Activated CD8-positive, alpha-beta T cell treated with anti-CD3 and anti-CD28 coated beads, Interleukin-2, amount 10 ng/mL, durations not matched to agents 7 days and 5 days (primary cell): ENCODE measurements at regions of chr22 and their contacts with region 1.

Region 1: GRCh38 chr22:37148742-37149665 is 712 bp downstream of the IL2RB start:
- DNase-seq: no peak
- ATAC-seq: peak; percentile 8
- H3K4me3 Mint-ChIP-seq: peak overlapping the region; percentile 84
- H3K27ac Mint-ChIP-seq: peak overlapping the region; percentile 99
- H3K4me1 Mint-ChIP-seq: peaks cover 56% of the 10 kb centered on the region
- H3K27me3 Mint-ChIP-seq: no peaks in the 10 kb centered on the region

Region 2: GRCh38 chr22:36702842-36703215 is 446.2 kb before region 1 on chr22:
- CTCF ChIA-PET with region 1: no interaction called
- POLR2A ChIA-PET with region 1: no interaction called
- DNase-seq: no peak
- ATAC-seq: no peak
- H3K4me3 Mint-ChIP-seq: no peak overlapping the region
- H3K27ac Mint-ChIP-seq: no peak overlapping the region
- H3K4me1 Mint-ChIP-seq: peaks cover 4% of the 10 kb centered on the region
- H3K27me3 Mint-ChIP-seq: peaks cover 49% of the 10 kb centered on the region

Region 3: GRCh38 chr22:37092997-37093396 is 56.0 kb before region 1 on chr22:
- CTCF ChIA-PET with region 1: no interaction called
- POLR2A ChIA-PET with region 1: no interaction called
- DNase-seq: no peak
- ATAC-seq: no peak
- H3K4me3 Mint-ChIP-seq: no peak overlapping the region
- H3K27ac Mint-ChIP-seq: no peak overlapping the region
- H3K4me1 Mint-ChIP-seq: peaks cover 21% of the 10 kb centered on the region
- H3K27me3 Mint-ChIP-seq: no peaks in the 10 kb centered on the region

Region 4: DNA sequence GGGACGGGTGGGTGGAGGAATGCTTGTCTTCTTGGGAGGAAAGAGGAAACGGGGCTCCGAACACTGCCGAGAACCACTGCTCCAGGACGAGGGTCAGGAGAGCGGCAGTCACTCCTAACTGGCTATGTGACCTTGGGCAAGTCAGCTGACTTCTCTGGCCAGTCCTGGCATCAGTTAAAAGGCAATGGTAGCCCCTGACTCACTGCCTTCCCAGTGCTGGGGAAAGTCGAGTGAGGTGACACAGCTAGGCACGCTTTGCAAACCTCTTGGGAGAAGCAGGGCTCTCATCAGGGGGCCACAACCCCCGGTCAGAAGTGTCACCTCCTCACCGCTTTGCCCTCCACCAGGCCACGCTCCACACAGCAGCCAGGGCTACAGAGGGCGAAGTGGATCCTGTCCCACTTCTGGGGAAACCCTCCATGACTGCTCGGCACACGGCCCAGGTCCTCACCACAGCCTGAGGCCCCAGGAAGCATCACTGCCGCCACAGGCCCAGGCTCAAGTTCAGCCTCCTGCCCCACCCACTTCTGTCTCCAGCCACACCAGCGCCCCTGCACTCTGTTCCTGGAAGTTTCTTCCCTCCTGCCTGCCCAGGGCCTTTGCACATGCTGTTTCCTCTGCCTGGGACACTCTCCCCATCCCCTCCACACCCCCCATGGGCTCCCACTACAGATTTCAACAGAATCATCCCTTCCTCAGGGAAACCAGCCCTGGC is 15.5 kb before region 1 on chr22:
- CTCF ChIA-PET with region 1: interaction called, 6 read pairs
- POLR2A ChIA-PET with region 1: interaction called, 13 read pairs
- DNase-seq: no peak
- ATAC-seq: peak; percentile 40
- H3K4me3 Mint-ChIP-seq: no peak overlapping the region
- H3K27ac Mint-ChIP-seq: peak overlapping the region; percentile 72
- H3K4me1 Mint-ChIP-seq: peaks cover 51% of the 10 kb centered on the region
- H3K27me3 Mint-ChIP-seq: no peaks in the 10 kb centered on the region

Region 5: DNA sequence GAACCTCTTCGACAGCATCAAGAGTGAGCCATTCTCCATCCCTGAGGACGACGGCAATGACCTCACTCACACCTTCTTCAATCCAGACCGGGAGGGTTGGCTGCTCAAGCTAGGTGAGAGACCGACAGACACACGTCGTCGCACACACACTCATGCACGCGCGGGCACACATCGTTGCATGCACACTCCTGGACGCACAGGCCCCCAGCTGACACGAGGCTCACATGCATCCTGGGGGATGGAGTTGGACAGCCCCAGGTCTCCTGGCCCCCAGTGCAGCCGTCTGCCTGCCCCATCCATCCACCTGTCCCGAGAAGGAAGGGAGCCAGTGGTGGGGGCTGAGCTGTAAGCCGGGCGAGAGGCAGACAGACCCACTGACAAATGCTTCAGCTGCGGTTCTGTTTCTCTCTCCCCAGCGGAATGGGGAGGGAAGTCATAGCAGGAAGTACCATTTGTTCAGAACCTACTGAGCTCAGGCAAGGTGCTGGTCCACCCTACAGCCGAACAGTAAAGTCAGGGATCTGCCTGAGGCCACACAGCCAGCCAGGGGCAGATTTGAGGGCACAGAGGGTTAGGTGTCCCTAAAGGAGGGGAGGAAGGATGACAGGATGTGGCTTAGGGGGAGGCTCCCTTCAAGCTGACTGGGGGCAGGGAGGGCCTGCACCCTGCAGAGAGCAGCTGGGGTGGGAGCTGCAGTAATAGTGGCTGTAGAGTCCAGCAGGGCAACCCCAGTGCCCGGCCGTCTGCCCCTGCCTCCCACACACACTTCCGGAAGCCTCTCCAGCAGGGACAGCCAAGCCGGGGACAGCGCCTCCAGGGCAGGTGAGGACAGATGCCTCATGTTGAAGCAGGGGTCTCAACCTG is 160.4 kb after region 1 on chr22:
- CTCF ChIA-PET with region 1: no interaction called
- POLR2A ChIA-PET with region 1: no interaction called
- DNase-seq: peak; percentile 86
- ATAC-seq: peak; percentile 48
- H3K4me3 Mint-ChIP-seq: peak overlapping the region; percentile 45
- H3K27ac Mint-ChIP-seq: peak overlapping the region; percentile 96
- H3K4me1 Mint-ChIP-seq: peaks cover 95% of the 10 kb centered on the region
- H3K27me3 Mint-ChIP-seq: no peaks in the 10 kb centered on the region